Posterior cingulate gyrus (tissue), 11 donors: ENCODE measurements at regions of chr11 and their contacts with region 1.

Region 1: GRCh38 chr11:68213555-68214174 is 569 bp upstream of the KMT5B start:
- DNase-seq: peak; percentile 73 to 98 (median 86)

Region 2: GRCh38 chr11:68121067-68121899 is 92.4 kb before region 1 on chr11 and contains the start of gene CHKA:
- intact Hi-C with region 1: loop called (anchors 5 kb)
- DNase-seq: peak; percentile 85 to 99 (median 94)

Region 3: DNA sequence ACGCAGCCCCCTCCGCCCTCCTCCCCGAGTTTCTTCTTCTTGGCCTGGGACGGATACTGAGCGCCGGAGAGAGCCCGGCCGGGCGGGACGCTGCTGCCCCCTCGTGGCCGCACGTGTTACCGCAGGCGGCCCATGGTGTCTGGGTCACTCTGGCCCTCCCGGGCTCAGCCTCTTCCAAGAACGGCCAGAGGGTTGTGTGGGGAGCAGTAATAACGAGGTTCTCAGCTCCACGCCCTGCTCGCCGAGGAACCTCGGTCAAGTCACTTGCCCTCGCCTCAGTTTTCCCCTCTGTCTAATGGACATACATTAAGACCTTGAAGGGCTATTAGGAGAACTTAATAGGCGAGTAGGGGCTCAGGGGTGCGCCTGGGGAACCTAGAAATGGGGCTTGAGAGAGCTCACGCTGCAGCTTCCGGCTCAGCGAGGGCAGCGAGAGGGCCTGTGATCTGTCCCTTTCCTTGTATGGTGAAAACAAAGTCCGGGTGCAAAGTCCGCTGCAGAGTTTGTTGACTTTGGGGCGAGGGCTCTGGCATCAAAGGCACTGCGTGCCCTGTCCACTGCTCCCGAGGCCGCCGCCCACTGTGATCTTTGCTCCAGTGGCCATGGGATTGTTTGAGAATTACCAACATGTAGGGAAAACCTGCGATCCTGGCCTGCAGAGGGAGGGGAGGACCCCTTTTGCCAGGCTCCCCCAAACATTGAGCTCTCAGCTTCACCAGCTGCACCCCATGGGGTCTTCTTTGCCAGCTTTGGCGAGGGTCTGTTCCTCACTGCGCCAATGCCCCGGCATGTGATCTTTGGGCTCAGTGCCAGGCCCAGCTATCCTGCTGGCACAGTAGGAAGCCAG is 84.4 kb after region 1 on chr11:
- intact Hi-C with region 1: loop called (anchors 5 kb)
- DNase-seq: peak in 9 of 10 donors; percentile 43 to 96 (median 77)

Region 4: DNA sequence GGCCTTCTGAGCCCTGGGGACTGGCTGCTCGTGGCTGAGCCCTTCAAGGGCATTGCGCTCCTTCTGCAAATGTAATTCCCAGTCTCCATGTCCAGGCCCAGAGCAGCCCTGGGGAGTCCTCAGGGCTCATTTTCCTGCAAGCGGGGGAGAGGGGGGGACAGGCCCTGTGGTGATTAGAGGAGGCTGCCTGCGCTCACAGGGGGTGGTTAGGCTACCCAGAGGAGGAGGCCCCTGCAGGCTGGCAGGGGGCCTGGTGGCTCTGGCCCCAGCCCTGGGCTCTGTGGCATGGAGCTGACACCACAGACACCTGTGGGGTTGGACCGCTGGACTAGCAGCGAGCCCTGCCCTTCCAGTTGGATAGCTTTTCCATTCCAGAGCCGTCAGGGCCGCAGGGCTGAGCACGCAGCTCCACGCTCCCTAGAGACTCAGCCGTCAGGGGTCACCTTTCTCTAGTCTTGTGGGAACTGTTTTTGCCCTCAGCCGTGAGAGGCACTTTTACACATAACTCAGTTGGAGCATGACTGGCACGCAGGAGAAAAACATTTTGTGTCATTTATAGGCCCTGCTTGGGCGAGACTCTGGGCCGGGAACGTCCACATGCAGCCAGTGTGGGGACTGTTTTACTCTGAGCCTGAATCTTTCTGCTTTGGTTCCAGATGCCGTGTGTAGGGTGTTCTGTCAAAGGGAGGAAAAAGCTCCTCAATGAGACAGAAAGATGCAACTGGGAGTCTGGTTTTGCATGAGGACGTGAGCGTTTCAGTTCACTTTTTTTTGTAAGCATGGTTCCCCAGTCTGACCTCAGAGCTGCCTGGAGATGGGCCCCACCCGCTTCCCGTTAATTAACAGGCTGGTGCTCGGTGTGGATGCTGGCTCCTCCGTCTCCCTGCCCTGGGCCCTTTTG is 156.8 kb after region 1 on chr11:
- intact Hi-C with region 1: loop called (anchors 10 kb)
- DNase-seq: no peak